OCI-LY7 (cell line): ENCODE measurements at regions of chr16 and their contacts with region 1.

Region 1: GRCh38 chr16:88803264-88803987 is at the start of gene CDT1:
- DNase-seq: peak; percentile 89
- H3K4me3 ChIP-seq: peak within 1 kb of the TSS; percentile 88
- H3K27ac ChIP-seq: peak within 1 kb of the TSS; percentile 97
- H3K4me1 ChIP-seq: peaks cover 55% of the 10 kb centered on the region
- CTCF ChIP-seq: no peak
- total RNA-seq, gene CDT1: 82.7 and 90.2 TPM in 2 replicates

Region 2: GRCh38 chr16:88550246-88550661 is 253.2 kb before region 1 on chr16:
- CTCF ChIA-PET with region 1: no interaction called
- POLR2A ChIA-PET with region 1: no interaction called
- intact Hi-C with region 1: no loop called
- DNase-seq: no peak
- H3K4me3 ChIP-seq: no peak overlapping the region
- H3K27ac ChIP-seq: no peak overlapping the region
- H3K4me1 ChIP-seq: peaks cover 56% of the 10 kb centered on the region
- CTCF ChIP-seq: no peak

Region 3: DNA sequence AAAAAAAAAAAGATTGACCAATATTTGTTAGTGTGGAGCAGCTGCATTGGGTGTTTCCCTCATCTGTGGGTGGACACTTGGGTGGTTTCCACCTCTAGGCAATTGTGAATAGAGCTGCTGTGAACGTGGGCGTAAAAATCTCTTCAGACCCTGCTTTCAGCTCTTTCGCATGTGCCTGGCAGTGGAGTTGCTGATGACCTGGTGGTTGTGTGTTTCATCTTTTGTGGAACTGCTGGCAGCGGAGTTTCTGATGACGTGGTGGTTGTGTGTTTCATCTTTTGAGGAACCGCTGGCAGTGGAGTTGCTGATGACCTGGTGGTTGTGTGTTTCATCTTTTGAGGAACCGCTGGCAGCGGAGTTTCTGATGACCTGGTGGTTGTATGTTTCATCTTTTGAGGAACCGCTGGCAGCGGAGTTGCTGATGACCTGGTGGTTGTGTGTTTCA is 211.8 kb before region 1 on chr16:
- CTCF ChIA-PET with region 1: no interaction called
- POLR2A ChIA-PET with region 1: no interaction called
- intact Hi-C with region 1: no loop called
- DNase-seq: no peak
- H3K4me3 ChIP-seq: no peak overlapping the region
- H3K27ac ChIP-seq: no peak overlapping the region
- H3K4me1 ChIP-seq: no peaks in the 10 kb centered on the region
- CTCF ChIP-seq: no peak

Region 4: GRCh38 chr16:88737298-88738150 is 65.9 kb before region 1 on chr16:
- CTCF ChIA-PET with region 1: no interaction called
- POLR2A ChIA-PET with region 1: interaction called, 5 read pairs
- intact Hi-C with region 1: loop called (anchors 1 kb)
- DNase-seq: peak; percentile 82
- H3K4me3 ChIP-seq: no peak overlapping the region
- H3K27ac ChIP-seq: no peak overlapping the region
- H3K4me1 ChIP-seq: peaks cover 18% of the 10 kb centered on the region
- CTCF ChIP-seq: peak; percentile 94

Region 5: GRCh38 chr16:88785106-88785924 is 18.1 kb before region 1 on chr16 and contains the start of gene PIEZO1:
- CTCF ChIA-PET with region 1: no interaction called
- POLR2A ChIA-PET with region 1: interaction called, 7 read pairs
- intact Hi-C with region 1: loop called (anchors 1 kb)
- DNase-seq: peak; percentile 82
- H3K4me3 ChIP-seq: peak within 1 kb of the TSS; percentile 83
- H3K27ac ChIP-seq: peak within 1 kb of the TSS; percentile 57
- H3K4me1 ChIP-seq: peaks cover 51% of the 10 kb centered on the region
- CTCF ChIP-seq: peak; percentile 82
- total RNA-seq, gene PIEZO1: 123 and 144 TPM in 2 replicates

Region 6: DNA sequence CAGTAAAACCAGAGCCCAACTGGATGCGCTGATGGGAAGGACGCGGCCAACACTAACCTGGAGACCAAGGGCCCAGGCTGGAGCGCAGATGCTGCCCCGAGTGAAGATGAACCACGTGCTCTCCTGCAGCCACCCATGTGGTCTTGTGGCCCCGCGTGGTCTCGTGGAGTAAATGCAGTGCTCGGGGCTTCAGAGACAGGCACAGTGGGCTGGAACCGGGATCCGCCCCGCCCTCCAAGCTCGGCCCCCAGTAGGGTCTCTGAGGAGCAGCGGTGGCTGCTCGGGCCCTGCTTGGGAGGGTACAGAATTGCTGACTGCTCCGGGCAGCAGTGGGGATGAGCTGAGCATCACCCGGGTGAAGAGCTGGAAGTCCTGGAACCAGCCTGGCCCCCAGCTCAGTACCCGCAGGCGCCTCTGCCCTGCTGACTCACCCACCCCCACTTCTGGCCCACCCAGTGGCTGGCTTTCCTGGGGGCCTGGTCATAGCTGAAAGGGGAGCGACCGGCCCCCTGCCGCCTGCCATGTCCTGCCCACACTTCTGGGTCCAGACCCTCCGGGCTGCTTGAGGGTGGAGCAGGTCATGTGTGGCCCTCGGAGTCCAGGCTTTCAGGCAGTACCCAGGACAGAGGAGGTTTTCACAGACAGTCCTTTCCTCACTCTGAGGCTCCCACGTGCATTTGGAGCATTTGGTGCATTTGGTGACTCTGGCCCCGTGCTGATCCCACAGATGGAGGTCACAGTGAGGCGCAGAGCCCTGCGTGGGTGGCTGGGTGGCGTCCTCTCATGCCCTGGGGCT is 11.5 kb before region 1 on chr16:
- CTCF ChIA-PET with region 1: interaction called, 4 read pairs
- POLR2A ChIA-PET with region 1: interaction called, 15 read pairs
- intact Hi-C with region 1: no loop called
- DNase-seq: no peak
- H3K4me3 ChIP-seq: peak overlapping the region; percentile 24
- H3K27ac ChIP-seq: peak overlapping the region; percentile 80
- H3K4me1 ChIP-seq: peaks cover 61% of the 10 kb centered on the region
- CTCF ChIP-seq: no peak

Region 7: GRCh38 chr16:88941913-88942909 is 138.8 kb after region 1 on chr16:
- CTCF ChIA-PET with region 1: no interaction called
- POLR2A ChIA-PET with region 1: no interaction called
- intact Hi-C with region 1: no loop called
- DNase-seq: peak; percentile 84
- H3K4me3 ChIP-seq: peak overlapping the region; percentile 47
- H3K27ac ChIP-seq: peak overlapping the region; percentile 2
- H3K4me1 ChIP-seq: peaks cover 49% of the 10 kb centered on the region
- CTCF ChIP-seq: peak; percentile 63

Region 8: DNA sequence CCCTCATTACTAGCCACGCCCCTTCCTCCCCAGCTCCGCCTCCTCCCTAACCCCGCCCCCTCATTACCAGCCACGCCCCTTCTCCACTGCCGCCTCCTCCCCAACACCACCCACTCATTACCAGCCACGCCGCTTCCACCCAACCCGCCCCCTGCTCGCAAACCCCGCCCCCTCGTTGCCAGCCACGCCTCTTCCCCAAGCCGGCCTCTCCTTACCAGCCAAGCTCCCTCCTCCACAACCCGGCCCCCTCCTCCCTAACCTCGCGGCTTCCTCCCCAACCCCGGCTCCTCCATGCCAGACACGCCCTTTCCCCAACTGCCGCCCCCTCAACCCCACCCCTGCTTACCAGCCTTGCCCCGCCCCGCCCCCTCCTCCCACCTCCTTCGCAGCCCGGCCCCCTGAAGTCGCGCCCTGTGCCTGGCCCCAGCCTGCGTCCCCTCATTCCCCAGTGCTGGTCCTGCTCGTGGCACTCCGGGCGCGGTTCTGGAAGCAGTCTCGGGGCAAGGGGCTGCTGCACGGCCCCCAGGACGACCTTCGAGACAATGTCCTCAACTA is 389.7 kb after region 1 on chr16:
- CTCF ChIA-PET with region 1: no interaction called
- POLR2A ChIA-PET with region 1: no interaction called
- intact Hi-C with region 1: no loop called
- DNase-seq: peak; percentile 72
- H3K4me3 ChIP-seq: no peak overlapping the region
- H3K27ac ChIP-seq: no peak overlapping the region
- H3K4me1 ChIP-seq: no peaks in the 10 kb centered on the region
- CTCF ChIP-seq: no peak